Activated naive CD4-positive, alpha-beta T cell treated with anti-CD3 and anti-CD28 coated beads for 36 hours (primary cell): ENCODE measurements at regions of chr14 and their contacts with region 1.

Region 1: DNA sequence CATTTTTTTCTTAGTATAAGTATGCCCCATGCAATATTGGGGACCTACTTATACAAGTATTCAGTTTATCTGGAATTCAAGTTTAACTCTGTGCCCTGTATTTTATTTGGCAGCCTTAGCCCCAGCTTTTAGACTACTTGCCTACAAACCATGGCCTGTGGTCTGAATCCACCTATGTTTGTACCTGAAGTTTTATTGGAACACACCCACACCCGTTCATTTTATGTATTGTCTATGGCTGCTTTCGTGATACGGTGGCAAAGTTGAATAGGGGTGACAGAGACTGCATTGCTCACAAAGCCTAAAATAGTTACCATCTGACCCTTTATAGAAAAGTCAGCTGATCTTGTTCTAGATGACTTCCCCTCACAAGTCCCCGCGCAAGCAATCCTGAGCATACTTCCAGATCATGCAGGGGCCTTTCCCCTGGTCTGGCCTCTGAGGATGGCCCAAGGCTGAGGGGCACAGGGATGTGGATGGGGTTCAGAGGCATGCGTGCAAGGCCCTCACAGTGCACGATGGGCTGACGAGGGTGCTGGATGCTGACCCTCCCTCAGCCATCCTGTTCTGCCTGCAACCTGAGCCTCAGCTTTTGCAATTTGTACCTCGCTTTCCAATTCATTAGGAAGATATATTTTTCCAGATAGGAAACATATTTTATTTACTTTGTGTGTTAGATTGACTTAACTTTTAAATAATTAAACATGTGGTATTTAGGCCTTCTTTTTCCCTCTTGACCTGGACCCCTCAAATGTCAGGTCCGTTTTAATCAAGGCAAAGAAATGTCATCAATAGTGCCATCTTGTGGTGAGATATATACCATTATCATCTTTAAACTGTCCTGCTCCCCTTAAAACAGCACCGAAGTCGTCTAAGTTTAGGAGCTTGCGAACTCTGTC is 527.3 kb upstream of the CCDC196 start:
- DNase-seq: no peak
- H3K4me3 Mint-ChIP-seq: no peak overlapping the region
- H3K27ac Mint-ChIP-seq: no peak overlapping the region
- H3K4me1 Mint-ChIP-seq: peaks cover 13% of the 10 kb centered on the region
- H3K27me3 Mint-ChIP-seq: no peaks in the 10 kb centered on the region

Region 2: DNA sequence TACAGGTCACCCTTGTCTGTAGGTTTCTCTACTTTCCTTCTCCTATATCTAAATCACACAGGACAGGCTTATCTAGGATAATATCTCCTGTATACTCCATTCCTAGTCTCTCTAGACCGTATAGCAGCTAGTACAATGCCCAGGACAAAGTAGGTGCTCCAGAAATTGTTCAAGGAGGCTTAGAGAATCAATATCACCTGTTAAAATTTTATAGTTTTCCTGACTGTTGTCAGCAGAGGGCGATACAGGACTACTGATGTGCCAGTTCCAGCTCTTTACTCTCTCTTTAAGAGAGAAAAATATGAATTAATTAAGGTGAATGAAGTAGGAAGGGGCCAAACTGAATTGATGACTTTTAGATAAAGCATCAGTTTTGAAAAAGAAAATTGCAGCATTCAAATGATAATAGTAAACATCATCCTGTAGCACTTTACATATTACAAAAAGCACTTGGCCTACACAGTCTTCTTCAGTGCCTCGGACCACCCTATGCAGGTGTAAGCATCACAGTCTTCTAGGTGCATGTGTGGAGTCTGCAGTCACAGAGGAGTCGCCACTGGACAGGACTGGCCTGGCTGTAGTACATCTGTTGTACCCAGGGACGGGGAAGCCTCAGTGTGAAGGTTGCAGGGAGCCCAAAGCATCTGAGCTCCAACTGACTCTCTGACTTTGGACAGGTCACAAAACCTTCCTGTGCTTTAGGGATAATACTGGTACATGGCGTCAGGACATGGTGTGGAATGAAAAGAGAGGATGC is 794.7 kb before region 1 on chr14:
- CTCF ChIA-PET with region 1: interaction called, 41 read pairs
- intact Hi-C with region 1: loop called (anchors 1 kb)
- DNase-seq: peak; percentile 57
- H3K4me3 Mint-ChIP-seq: no peak overlapping the region
- H3K27ac Mint-ChIP-seq: no peak overlapping the region
- H3K4me1 Mint-ChIP-seq: peaks cover 5% of the 10 kb centered on the region
- H3K27me3 Mint-ChIP-seq: no peaks in the 10 kb centered on the region

Region 3: DNA sequence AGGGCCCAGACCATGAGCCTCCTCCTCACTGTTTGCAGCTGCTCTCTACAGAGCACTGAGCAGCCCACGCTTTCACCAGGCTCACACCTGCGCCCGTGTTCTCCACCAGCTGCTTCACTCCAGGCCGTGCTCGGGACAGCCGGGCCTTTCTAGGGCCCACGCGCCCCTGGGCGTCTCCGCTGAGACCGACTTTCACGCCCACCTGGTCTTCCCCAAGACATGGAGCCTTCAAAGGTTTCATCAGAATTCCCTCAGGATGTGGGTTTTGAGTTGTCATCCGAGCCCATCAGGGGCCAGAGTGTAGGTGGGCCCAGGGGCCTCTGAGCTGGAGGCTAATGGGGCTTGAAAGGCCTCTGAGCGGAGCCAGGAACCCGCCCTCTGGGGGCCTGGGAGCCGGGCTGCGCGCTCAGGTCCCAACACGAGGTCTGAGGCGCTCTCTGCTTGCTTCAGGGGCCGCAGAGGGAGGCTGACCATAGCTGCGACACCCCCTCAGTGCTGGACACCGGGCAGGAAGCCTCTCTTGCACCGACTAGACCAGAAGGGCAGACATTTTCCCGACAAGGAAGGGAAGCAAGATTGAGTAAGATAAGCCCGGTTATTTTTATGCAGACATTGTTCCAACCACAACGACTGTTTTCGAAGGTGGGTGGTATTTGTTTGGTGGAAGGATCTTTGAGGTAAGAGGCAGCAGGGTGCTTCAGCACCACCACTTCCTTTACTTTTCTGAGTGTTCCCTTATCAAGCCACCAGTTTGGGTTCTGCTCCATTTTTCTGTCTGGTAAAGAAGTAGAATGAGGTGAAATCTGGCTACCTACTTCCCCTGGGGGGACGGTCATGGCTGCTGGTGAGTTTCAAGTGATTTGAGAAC is 671.4 kb before region 1 on chr14:
- CTCF ChIA-PET with region 1: interaction called, 3 read pairs
- intact Hi-C with region 1: loop called (anchors 1 kb)
- DNase-seq: peak; percentile 66
- H3K4me3 Mint-ChIP-seq: peak overlapping the region; percentile 74
- H3K27ac Mint-ChIP-seq: peak overlapping the region; percentile 98
- H3K4me1 Mint-ChIP-seq: peaks cover 64% of the 10 kb centered on the region
- H3K27me3 Mint-ChIP-seq: no peaks in the 10 kb centered on the region

Region 4: GRCh38 chr14:65824285-65824977 is 134.5 kb before region 1 on chr14:
- CTCF ChIA-PET with region 1: interaction called, 23 read pairs
- intact Hi-C with region 1: loop called (anchors 1 kb)
- DNase-seq: peak; percentile 78
- H3K4me3 Mint-ChIP-seq: no peak overlapping the region
- H3K27ac Mint-ChIP-seq: no peak overlapping the region
- H3K4me1 Mint-ChIP-seq: peaks cover 5% of the 10 kb centered on the region
- H3K27me3 Mint-ChIP-seq: no peaks in the 10 kb centered on the region

Region 5: GRCh38 chr14:65879248-65880009 is 79.5 kb before region 1 on chr14:
- CTCF ChIA-PET with region 1: interaction called, 11 read pairs
- intact Hi-C with region 1: no loop called
- DNase-seq: peak; percentile 18
- H3K4me3 Mint-ChIP-seq: no peak overlapping the region
- H3K27ac Mint-ChIP-seq: peak overlapping the region; percentile 48
- H3K4me1 Mint-ChIP-seq: peaks cover 31% of the 10 kb centered on the region
- H3K27me3 Mint-ChIP-seq: no peaks in the 10 kb centered on the region

Region 6: DNA sequence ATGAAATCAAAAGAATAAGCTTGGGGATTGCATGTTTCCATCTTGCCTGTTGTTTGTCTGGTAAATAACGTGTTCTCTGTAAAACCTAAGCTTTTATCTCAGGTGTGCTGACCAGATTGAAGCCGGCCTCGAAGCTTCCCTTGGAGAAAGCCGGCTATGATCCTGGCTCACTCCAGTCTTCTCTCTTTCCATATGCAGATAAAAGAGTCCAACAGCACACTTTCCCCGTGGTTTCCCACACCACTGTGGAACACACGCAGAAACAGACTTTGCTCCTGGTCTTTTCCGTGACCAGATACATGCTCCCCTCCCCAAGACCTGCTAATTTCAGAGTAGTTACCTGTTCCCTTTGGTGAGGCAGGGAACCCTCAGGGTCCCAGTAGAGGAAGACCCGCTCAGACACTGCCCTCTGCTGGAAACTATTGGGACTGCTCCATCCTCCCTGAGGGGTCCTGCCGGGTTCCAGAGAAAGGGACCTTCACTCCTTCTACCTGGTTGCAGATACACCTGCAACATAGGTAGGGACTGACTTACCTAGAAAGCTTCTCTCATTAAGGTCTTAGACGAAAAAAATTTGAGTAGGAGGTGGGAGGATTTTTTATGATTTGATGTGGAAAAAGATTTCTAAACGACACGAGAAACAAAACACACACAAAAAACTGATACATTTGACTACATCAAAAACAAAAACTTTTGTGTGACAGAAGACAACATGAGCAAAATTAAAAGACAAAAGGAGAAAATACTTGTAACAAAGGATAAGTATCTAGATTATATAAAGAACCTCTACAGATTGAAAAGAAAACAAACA is 111.8 kb after region 1 on chr14:
- CTCF ChIA-PET with region 1: interaction called, 25 read pairs
- intact Hi-C with region 1: loop called (anchors 1 kb)
- DNase-seq: peak; percentile 73
- H3K4me3 Mint-ChIP-seq: no peak overlapping the region
- H3K27ac Mint-ChIP-seq: no peak overlapping the region
- H3K4me1 Mint-ChIP-seq: no peaks in the 10 kb centered on the region
- H3K27me3 Mint-ChIP-seq: no peaks in the 10 kb centered on the region